ENCODE measurements at regions of chr6 and their contacts with region 1.

Region 1: DNA sequence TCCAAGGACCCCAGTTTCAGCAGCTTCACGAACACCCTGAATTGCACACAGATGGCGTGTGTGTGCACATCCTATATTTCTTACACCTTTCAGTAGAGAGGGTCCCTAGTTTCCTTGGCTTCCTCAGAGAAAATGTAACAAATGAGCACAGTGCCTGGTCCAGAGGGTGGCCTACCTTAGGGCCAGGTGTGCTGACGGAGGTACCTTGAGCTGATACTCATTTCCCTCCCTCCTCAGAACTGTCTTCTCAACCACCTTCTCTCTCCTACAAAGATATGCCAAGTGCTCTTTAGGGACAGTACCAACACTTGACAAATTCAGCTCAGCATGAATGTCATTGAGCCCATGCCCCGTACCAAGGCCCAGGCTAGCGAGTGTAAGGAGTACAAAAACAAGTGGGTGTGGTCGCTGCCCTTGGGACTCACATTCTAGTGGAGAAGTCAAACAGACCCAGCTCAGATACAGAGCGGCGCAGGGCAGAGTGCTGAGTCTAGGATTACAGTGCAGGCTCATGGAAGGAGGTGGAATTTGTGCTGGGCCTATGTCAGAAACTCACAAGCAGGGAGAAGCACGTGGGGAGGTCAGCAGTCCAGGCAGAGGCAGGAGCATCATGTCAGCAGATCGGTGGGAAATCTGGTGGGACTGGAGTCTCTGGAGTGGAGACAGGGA is 9.6 kb upstream of the BPHL start:
- DNase-seq: no peak
- H3K4me3 Mint-ChIP-seq: no peak overlapping the region
- H3K27ac Mint-ChIP-seq: no peak overlapping the region
- H3K4me1 Mint-ChIP-seq: peaks cover 12% of the 10 kb centered on the region
- H3K27me3 Mint-ChIP-seq: no peaks in the 10 kb centered on the region

Region 2: GRCh38 chr6:2911171-2911570 is 197.7 kb before region 1 on chr6:
- CTCF ChIA-PET with region 1: no interaction called
- POLR2A ChIA-PET with region 1: no interaction called
- DNase-seq: no peak
- H3K4me3 Mint-ChIP-seq: no peak overlapping the region
- H3K27ac Mint-ChIP-seq: no peak overlapping the region
- H3K4me1 Mint-ChIP-seq: peaks cover 39% of the 10 kb centered on the region
- H3K27me3 Mint-ChIP-seq: no peaks in the 10 kb centered on the region

Region 3: GRCh38 chr6:3119040-3119723 is 10.3 kb after region 1 on chr6:
- CTCF ChIA-PET with region 1: interaction called, 10 read pairs
- POLR2A ChIA-PET with region 1: no interaction called
- DNase-seq: no peak
- H3K4me3 Mint-ChIP-seq: peak overlapping the region; percentile 80
- H3K27ac Mint-ChIP-seq: peak overlapping the region; percentile 51
- H3K4me1 Mint-ChIP-seq: peaks cover 22% of the 10 kb centered on the region
- H3K27me3 Mint-ChIP-seq: no peaks in the 10 kb centered on the region

Measured in activated CD4-positive, alpha-beta T cell treated with anti-CD3 and anti-CD28 coated beads, Interleukin-2, amount 10 ng/mL, durations not matched to agents 7 days and 5 days (primary cell).